ENCODE measurements at regions of chr3 and their contacts with region 1.

Region 1: GRCh38 chr3:182436547-182436946 is 356.8 kb upstream of the ATP11B start:
- DNase-seq: no peak
- H3K4me3 ChIP-seq: no peak overlapping the region
- H3K27ac ChIP-seq: no peak overlapping the region
- H3K4me1 ChIP-seq: no peaks in the 10 kb centered on the region
- H3K27me3 ChIP-seq: no peaks in the 10 kb centered on the region
- CTCF ChIP-seq: no peak
- EP300 ChIP-seq: no peak
- POLR2A ChIP-seq: no peak

Region 2: DNA sequence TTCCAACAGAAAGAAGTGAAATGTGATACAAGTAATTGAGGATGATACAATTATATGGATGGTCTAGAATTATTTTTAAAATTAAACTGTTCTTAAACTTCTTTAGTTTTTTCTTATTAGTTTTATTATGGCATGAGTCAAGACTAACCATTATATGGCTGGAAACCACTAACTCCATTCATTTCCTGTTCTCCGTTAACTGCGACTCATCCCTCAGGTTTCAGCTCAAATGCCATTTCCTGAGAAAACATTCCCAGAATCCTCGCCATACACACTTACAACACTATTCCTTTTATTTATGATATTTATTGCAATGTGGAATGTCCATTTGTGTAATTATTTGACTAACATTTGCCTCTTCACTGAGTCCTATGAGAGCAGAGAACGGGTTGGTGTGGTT is 330.7 kb before region 1 on chr3:
- in situ Hi-C with region 1: no loop called
- intact Hi-C with region 1: no loop called
- DNase-seq: no peak
- H3K4me3 ChIP-seq: no peak overlapping the region
- H3K27ac ChIP-seq: no peak overlapping the region
- H3K4me1 ChIP-seq: no peaks in the 10 kb centered on the region
- H3K27me3 ChIP-seq: no peaks in the 10 kb centered on the region
- CTCF ChIP-seq: no peak
- EP300 ChIP-seq: no peak
- POLR2A ChIP-seq: no peak

Region 3: GRCh38 chr3:182533394-182533793 is 96.8 kb after region 1 on chr3:
- in situ Hi-C with region 1: loop called in 1 of 4 experiments (anchors 25 kb)
- intact Hi-C with region 1: no loop called
- DNase-seq: no peak
- H3K4me3 ChIP-seq: no peak overlapping the region
- H3K27ac ChIP-seq: no peak overlapping the region
- H3K4me1 ChIP-seq: no peaks in the 10 kb centered on the region
- H3K27me3 ChIP-seq: no peaks in the 10 kb centered on the region
- CTCF ChIP-seq: no peak
- EP300 ChIP-seq: no peak
- POLR2A ChIP-seq: no peak

Measured in transverse colon (tissue), 4 donors.